Panc1 (cell line): ENCODE measurements at regions of chr21 and their contacts with region 1.

Region 1: DNA sequence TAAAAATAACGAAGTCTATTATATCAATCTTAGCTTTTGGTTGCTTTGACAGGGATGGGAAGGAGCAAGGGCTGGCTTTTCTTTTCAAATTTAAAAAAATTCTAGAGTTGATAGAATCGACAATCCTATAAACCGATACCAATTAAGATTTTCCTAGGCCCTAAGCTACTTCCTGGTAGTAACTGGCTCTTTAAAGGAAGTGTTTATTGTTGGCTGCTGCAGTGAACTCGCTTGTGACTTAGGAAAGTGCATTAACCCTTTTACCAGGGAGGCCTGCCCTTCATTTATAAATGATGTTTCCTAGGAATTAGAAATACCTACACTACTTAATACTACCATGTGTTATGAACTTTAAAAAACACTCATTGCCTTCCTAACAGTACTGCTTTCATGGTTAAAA is 33.2 kb downstream of the ATP5PF start:
- DNase-seq: no peak
- ATAC-seq: no peak
- H3K4me3 ChIP-seq: no peak overlapping the region
- H3K27ac ChIP-seq: no peak overlapping the region
- H3K4me1 ChIP-seq: no peaks in the 10 kb centered on the region
- H3K27me3 ChIP-seq: no peaks in the 10 kb centered on the region
- CTCF ChIP-seq: no peak

Region 2: DNA sequence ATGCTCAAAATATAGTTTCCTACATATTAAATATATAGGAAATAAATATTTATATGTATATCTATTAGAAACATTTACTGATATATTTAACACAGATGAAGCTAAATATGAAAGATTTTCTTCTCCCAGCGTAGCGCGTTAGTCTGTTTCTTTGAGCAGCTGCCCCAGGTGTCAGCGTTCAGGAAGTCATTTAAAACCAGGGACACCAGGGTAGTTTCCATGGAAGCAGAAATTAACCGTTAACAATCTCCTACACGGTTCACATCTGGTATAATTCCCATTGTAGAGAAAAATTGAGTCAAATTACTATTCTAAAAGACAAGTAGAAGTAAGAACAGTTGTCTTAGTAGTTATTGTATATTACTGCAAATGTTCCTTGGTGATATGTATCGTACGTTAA is 1538.0 kb before region 1 on chr21:
- CTCF ChIA-PET with region 1: interaction called, 18 read pairs
- POLR2A ChIA-PET with region 1: no interaction called
- in situ Hi-C with region 1: no loop called
- intact Hi-C with region 1: no loop called
- DNase-seq: no peak
- ATAC-seq: no peak
- H3K4me3 ChIP-seq: no peak overlapping the region
- H3K27ac ChIP-seq: no peak overlapping the region
- H3K4me1 ChIP-seq: no peaks in the 10 kb centered on the region
- H3K27me3 ChIP-seq: no peaks in the 10 kb centered on the region
- CTCF ChIP-seq: no peak

Region 3: GRCh38 chr21:25485914-25486313 is 215.6 kb before region 1 on chr21:
- CTCF ChIA-PET with region 1: no interaction called
- POLR2A ChIA-PET with region 1: no interaction called
- in situ Hi-C with region 1: no loop called
- intact Hi-C with region 1: no loop called
- DNase-seq: no peak
- ATAC-seq: no peak
- H3K4me3 ChIP-seq: no peak overlapping the region
- H3K27ac ChIP-seq: no peak overlapping the region
- H3K4me1 ChIP-seq: no peaks in the 10 kb centered on the region
- H3K27me3 ChIP-seq: no peaks in the 10 kb centered on the region
- CTCF ChIP-seq: no peak

Region 4: DNA sequence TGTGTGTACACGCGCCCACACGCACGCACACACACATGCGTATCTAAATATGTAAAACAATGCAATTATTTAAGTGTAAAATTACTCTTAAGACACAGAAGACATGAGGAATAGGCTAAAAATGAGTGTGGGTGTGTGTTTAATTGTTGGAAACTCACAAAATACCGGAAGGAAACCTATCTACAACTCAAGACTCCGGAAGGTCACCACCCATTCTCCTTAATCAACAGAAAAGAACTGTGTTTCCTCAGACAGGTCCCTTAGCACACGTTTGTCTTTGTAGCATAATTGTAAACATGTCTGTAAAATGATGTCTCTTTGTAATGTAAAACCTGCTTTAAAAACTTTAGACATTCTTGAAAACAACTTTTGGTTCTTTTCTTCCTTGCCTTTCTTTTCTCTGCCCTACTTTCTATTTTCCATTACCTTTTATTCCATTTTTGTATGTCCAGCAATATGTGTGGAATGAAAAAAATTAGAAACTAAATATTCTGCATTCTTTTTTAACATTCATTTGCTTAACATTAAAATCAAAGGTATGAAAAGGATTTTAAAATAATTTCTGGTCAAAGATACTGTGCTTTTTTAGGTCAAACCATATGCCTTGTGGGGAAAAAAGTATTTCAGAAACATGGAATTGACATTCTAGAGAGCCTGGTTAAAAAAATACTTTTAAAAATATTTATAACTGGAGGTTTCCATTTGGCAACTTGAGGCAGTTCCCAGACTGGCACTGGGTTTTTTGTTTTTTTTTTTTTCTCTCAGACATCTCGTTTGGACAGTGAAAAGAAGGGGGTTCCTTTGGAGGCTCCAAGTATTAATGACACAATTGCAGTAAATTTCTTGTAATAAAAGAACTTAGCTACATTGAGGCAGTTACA is 13.0 kb before region 1 on chr21:
- CTCF ChIA-PET with region 1: no interaction called
- POLR2A ChIA-PET with region 1: no interaction called
- in situ Hi-C with region 1: no loop called
- intact Hi-C with region 1: no loop called
- DNase-seq: no peak
- ATAC-seq: no peak
- H3K4me3 ChIP-seq: no peak overlapping the region
- H3K27ac ChIP-seq: no peak overlapping the region
- H3K4me1 ChIP-seq: no peaks in the 10 kb centered on the region
- H3K27me3 ChIP-seq: 0 out of 2 replicates have a peak, but pooled peaks cover 2% of the 10 kb centered on the region
- CTCF ChIP-seq: no peak

Region 5: DNA sequence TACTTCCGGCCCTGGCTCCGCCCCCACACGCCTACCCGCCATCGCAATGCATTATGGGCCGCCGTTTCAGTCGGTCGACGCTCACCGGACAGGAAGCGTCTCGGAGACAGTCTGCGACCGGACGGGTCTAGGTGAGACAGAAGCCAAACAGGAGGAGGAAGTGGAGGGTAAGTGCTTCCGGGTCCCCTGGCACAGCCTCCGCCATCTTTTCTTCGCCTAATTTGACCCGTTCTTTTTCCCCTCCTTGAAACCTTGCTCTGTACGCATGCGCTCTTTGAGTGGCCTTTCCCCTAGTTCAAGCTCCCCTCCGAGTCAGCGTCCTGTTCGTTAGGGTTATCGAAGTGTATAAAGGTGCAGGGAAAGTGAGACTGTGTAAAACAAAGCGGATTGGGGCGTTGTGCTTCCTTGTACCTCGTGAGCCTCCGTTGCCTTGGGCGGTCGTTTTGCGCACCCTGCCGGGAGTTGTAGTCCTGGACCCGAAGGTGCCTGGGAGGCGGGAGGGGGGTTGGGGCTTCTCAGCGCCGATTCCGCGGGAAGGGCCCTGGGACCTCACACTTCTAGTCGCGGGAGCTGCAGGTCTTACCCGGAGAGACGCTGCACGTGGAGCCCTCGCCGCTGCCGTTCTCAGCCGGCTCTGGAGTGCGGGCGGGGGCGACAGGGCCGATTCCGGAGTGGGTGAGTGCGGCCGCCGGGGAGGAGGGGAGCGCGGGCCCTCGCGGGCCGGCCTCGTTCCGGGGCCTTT is 33.5 kb after region 1 on chr21 and contains the starts of genes ATP5PF and GABPA:
- CTCF ChIA-PET with region 1: no interaction called
- POLR2A ChIA-PET with region 1: no interaction called
- in situ Hi-C with region 1: no loop called
- intact Hi-C with region 1: no loop called
- DNase-seq: peak; percentile 83
- ATAC-seq: peak; percentile 98
- H3K4me3 ChIP-seq: peak within 1 kb of the TSS; percentile 63 to 89
- H3K27ac ChIP-seq: peak within 1 kb of the TSS; percentile 98
- H3K4me1 ChIP-seq: peaks cover 9% of the 10 kb centered on the region; the same call in 1 of the 2 replicates
- H3K27me3 ChIP-seq: no peaks in the 10 kb centered on the region
- CTCF ChIP-seq: no peak
- total RNA-seq, gene ATP5PF: 103 TPM
- total RNA-seq, gene GABPA: 17.6 TPM

Region 6: DNA sequence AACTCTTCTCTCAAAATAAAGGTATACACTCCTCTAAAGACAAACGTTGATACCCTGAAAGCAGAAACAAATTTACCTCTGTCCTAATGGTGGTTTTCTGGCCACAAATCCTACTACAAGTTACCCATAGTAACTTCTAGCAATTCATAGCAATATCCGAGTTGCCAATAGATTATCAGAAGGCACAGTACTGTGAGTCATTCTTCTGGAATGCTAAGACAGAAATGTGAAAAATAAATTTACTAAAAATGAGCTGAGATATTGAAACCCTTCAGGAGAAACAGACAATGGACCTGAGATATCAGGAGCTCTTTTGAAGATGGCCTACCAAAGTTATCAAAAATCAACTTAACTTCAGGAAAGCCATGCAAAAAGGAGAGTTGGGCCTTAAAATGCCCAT is 1980.3 kb after region 1 on chr21:
- CTCF ChIA-PET with region 1: no interaction called
- POLR2A ChIA-PET with region 1: no interaction called
- in situ Hi-C with region 1: no loop called
- intact Hi-C with region 1: no loop called
- DNase-seq: no peak
- ATAC-seq: no peak
- H3K4me3 ChIP-seq: no peak overlapping the region
- H3K27ac ChIP-seq: no peak overlapping the region
- H3K4me1 ChIP-seq: no peaks in the 10 kb centered on the region
- H3K27me3 ChIP-seq: no peaks in the 10 kb centered on the region
- CTCF ChIP-seq: no peak